ENCODE measurements at regions of chr21 and their contacts with region 1.

Region 1: GRCh38 chr21:14523234-14523633 is 22.9 kb downstream of the SAMSN1 start:
- DNase-seq: peak; percentile 65
- ATAC-seq: peak; percentile 84
- H3K4me3 Mint-ChIP-seq: peak overlapping the region; percentile 54
- H3K27ac Mint-ChIP-seq: peak overlapping the region; percentile 86
- H3K4me1 Mint-ChIP-seq: peaks cover 61% of the 10 kb centered on the region
- H3K27me3 Mint-ChIP-seq: no peaks in the 10 kb centered on the region
- CTCF ChIP-seq: no peak

Region 2: GRCh38 chr21:14482165-14482564 is 41.1 kb before region 1 on chr21:
- CTCF ChIA-PET with region 1: no interaction called
- POLR2A ChIA-PET with region 1: no interaction called
- intact Hi-C with region 1: loop called (anchors 2 kb)
- DNase-seq: peak; percentile 68
- ATAC-seq: peak; percentile 83
- H3K4me3 Mint-ChIP-seq: peak overlapping the region; percentile 37
- H3K27ac Mint-ChIP-seq: peak overlapping the region; percentile 96
- H3K4me1 Mint-ChIP-seq: peaks cover 70% of the 10 kb centered on the region
- H3K27me3 Mint-ChIP-seq: no peaks in the 10 kb centered on the region
- CTCF ChIP-seq: no peak

Region 3: GRCh38 chr21:14533504-14534428 is 10.5 kb after region 1 on chr21:
- CTCF ChIA-PET with region 1: interaction called, 4 read pairs
- POLR2A ChIA-PET with region 1: interaction called, 16 read pairs
- intact Hi-C with region 1: no loop called
- DNase-seq: no peak
- ATAC-seq: peak; percentile 79
- H3K4me3 Mint-ChIP-seq: peak overlapping the region; percentile 72
- H3K27ac Mint-ChIP-seq: peak overlapping the region; percentile 99
- H3K4me1 Mint-ChIP-seq: peaks cover 78% of the 10 kb centered on the region
- H3K27me3 Mint-ChIP-seq: no peaks in the 10 kb centered on the region
- CTCF ChIP-seq: no peak

Region 4: DNA sequence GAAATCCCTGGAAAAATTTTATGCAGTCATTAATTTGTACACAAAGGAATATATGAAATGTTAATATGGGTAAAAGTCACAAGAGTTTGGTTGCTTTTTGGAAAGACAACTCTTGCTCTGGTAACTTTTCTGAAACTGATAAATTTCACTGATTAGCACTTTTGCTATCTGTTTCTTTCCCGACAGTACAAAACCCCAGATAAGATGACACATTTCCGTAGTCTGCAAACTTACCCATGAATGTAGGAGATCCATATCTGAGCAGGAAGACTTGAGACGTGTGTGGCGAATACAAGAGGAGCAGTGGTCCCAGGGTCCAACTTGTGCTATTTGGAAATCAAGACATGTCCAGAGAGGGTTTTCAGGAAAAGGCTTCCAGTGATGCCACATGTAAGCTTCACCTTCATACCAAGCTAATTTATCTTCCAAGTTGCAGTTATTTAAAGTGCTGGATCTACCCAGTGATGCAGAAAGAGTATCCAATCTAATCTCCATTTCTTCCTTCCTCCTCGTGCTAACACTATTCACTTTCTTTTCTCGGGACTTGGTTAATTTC is 58.7 kb after region 1 on chr21:
- CTCF ChIA-PET with region 1: no interaction called
- POLR2A ChIA-PET with region 1: no interaction called
- intact Hi-C with region 1: no loop called
- DNase-seq: no peak
- ATAC-seq: peak; percentile 42
- H3K4me3 Mint-ChIP-seq: no peak overlapping the region
- H3K27ac Mint-ChIP-seq: no peak overlapping the region
- H3K4me1 Mint-ChIP-seq: peaks cover 17% of the 10 kb centered on the region
- H3K27me3 Mint-ChIP-seq: no peaks in the 10 kb centered on the region
- CTCF ChIP-seq: no peak